ENCODE measurements at regions of chr15 and their contacts with region 1.

Region 1: DNA sequence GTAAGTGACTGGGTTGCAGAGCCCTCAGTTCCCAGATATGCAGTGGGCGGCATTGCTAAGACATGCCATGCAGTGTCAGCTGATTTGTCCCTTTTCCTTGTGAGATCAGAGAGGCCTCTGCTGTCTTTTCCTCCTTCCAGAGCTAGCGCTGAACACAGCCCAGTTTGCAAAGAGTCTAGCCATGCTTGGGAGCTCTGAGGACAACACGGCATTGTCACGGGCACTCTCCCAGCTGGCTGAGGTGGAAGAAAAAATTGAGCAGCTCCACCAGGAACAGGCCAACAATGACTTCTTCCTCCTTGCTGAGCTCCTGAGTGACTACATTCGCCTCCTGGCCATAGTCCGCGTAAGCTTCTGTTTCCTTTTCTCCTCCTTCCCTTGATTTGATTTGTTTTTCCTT is 20.0 kb upstream of the SNX22 start:
- DNase-seq: no peak
- CTCF ChIP-seq: no peak

Region 2: DNA sequence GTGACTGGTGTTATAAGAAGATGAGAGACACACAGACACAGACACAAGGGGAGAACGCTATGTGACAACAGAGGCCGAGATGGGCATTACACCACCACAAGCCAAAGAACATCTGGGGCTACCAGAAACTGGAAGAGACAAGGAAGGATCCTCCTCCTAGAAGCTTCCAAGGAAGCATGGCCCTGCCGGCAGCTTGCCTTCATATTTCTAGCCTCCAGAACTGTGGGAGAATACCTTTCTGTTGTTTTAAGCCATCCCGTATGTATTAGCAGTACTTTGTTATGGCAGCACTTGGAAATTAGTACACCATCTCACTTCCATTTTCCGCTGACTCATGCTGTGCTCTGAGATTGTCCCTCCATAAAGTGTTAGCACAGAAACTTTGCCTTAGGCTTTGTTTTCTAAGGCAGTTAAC is 711.2 kb before region 1 on chr15:
- CTCF ChIA-PET with region 1: no interaction called
- POLR2A ChIA-PET with region 1: no interaction called
- DNase-seq: no peak
- CTCF ChIP-seq: no peak

Region 3: DNA sequence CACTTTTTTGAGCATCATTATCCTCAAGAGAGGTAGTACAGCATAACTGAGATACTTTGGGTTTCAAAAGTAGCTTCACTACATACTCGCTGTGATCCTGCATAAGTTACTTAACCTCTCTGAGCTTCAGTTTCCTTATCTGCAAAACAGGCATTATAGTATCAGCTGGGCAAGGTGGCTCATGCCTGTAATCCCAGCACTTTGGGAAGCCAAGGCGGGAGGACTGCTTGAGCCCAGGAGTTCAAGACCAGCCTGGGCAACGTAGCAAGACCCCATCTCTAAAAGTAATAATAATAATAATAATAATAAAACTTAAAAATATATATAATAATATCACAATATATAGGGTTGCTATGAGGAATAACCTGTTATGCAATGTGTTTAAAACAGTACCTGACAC is 48.8 kb before region 1 on chr15:
- CTCF ChIA-PET with region 1: no interaction called
- POLR2A ChIA-PET with region 1: no interaction called
- DNase-seq: no peak
- CTCF ChIP-seq: no peak

Region 4: GRCh38 chr15:64144565-64145281 is 13.2 kb after region 1 on chr15:
- CTCF ChIA-PET with region 1: interaction called, 11 read pairs
- POLR2A ChIA-PET with region 1: no interaction called
- DNase-seq: peak; percentile 82
- CTCF ChIP-seq: no peak